Posterior vena cava (tissue), 2 donors: ENCODE measurements at regions of chr13 and their contacts with region 1.

Region 1: GRCh38 chr13:42102961-42103865 is 54.8 kb downstream of the DGKH start:
- DNase-seq: no peak

Region 2: DNA sequence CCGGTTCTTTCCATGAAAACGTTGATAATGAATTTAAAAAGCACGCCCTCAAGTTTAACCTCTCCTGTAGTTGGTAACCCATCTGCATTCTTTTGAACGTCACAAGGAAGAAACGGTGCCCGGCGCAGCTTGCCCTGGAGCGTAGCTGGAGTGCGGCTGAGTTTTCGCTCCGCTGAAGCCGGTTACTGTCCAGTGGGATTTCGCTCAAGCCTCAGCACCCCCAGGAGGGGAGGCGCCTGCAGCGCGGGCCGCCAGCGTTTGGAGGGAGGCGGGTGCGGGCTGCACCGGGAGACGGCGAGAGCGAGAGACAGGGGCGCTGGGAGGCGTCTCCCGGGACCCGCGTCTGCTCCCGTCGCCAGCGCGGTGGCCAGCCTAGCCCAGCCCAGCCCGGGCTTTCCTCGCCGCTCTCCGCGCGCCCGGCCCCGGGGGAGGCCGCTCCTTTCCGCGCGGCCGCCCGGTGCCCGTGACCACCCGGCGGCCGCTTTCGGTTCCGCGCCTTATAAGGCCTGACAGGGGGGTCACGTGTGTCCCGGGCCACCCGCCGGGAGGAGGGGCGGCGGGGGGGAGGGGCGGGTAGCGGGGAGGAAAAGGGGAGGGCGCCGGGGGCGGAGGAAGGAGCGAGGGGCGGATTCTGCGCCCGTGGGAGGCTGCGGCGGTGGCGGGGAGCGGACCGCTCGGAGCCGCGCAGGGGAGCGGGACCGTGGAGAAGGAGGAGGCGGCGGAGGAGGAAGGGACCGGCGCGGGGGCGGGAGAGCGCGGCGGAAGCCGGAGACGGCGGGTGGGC is 63.1 kb before region 1 on chr13:
- intact Hi-C with region 1: loop called in 1 of 2 experiments (anchors 10 kb)
- DNase-seq: peak; percentile 97

Region 3: GRCh38 chr13:42392716-42393572 is 289.7 kb after region 1 on chr13:
- intact Hi-C with region 1: no loop called
- DNase-seq: no peak